AG04450 (cell line): ENCODE measurements at regions of chr11 and their contacts with region 1.

Region 1: GRCh38 chr11:35822815-35823495 is 120.9 kb upstream of the LDLRAD3 start:
- DNase-seq: no peak
- H3K4me3 ChIP-seq: no peak overlapping the region
- H3K27ac ChIP-seq: no peak overlapping the region
- H3K27me3 ChIP-seq: no peaks in the 10 kb centered on the region
- CTCF ChIP-seq: no peak

Region 2: GRCh38 chr11:35485656-35486322 is 337.2 kb before region 1 on chr11:
- CTCF ChIA-PET with region 1: interaction called, 17 read pairs
- POLR2A ChIA-PET with region 1: no interaction called
- DNase-seq: peak; percentile 42
- H3K4me3 ChIP-seq: no peak overlapping the region
- H3K27ac ChIP-seq: no peak overlapping the region
- H3K27me3 ChIP-seq: no peaks in the 10 kb centered on the region
- CTCF ChIP-seq: peak; percentile 90

Region 3: GRCh38 chr11:35709386-35709785 is 113.6 kb before region 1 on chr11:
- CTCF ChIA-PET with region 1: interaction called, 10 read pairs
- POLR2A ChIA-PET with region 1: no interaction called
- DNase-seq: no peak
- H3K4me3 ChIP-seq: no peak overlapping the region
- H3K27ac ChIP-seq: no peak overlapping the region
- H3K27me3 ChIP-seq: no peaks in the 10 kb centered on the region
- CTCF ChIP-seq: no peak

Region 4: GRCh38 chr11:35838071-35838470 is 15.1 kb after region 1 on chr11:
- CTCF ChIA-PET with region 1: interaction called, 60 read pairs
- POLR2A ChIA-PET with region 1: no interaction called
- DNase-seq: no peak
- H3K4me3 ChIP-seq: no peak overlapping the region
- H3K27ac ChIP-seq: no peak overlapping the region
- H3K27me3 ChIP-seq: peaks cover 7% of the 10 kb centered on the region
- CTCF ChIP-seq: no peak

Region 5: GRCh38 chr11:35943713-35944655 is 121.0 kb after region 1 on chr11 and contains the start of gene LDLRAD3:
- CTCF ChIA-PET with region 1: interaction called, 13 read pairs
- POLR2A ChIA-PET with region 1: no interaction called
- DNase-seq: peak; percentile 56
- H3K4me3 ChIP-seq: peak within 1 kb of the TSS; percentile 78
- H3K27ac ChIP-seq: peak within 1 kb of the TSS; percentile 69
- H3K27me3 ChIP-seq: no peaks in the 10 kb centered on the region
- CTCF ChIP-seq: no peak
- polyA plus RNA-seq, gene LDLRAD3: 7.8 and 8.8 TPM in 2 replicates

Region 6: GRCh38 chr11:36131721-36132397 is 308.9 kb after region 1 on chr11:
- CTCF ChIA-PET with region 1: interaction called, 89 read pairs
- POLR2A ChIA-PET with region 1: interaction called, 6 read pairs
- DNase-seq: no peak
- H3K4me3 ChIP-seq: no peak overlapping the region
- H3K27ac ChIP-seq: no peak overlapping the region
- H3K27me3 ChIP-seq: no peaks in the 10 kb centered on the region
- CTCF ChIP-seq: peak; percentile 82

Region 7: GRCh38 chr11:36271794-36272407 is 448.9 kb after region 1 on chr11:
- CTCF ChIA-PET with region 1: interaction called, 94 read pairs
- POLR2A ChIA-PET with region 1: no interaction called
- DNase-seq: no peak
- H3K4me3 ChIP-seq: no peak overlapping the region
- H3K27ac ChIP-seq: no peak overlapping the region
- H3K27me3 ChIP-seq: no peaks in the 10 kb centered on the region
- CTCF ChIP-seq: no peak